Activated naive CD4-positive, alpha-beta T cell treated with anti-CD3 and anti-CD28 coated beads for 36 hours (primary cell): ENCODE measurements at regions of chr1 and their contacts with region 1.

Region 1: GRCh38 chr1:109213785-109214468 is at the start of gene SARS1:
- DNase-seq: peak; percentile 90
- H3K4me3 Mint-ChIP-seq: peak within 1 kb of the TSS; percentile 100
- H3K27ac Mint-ChIP-seq: peak within 1 kb of the TSS; percentile 100
- H3K4me1 Mint-ChIP-seq: peaks cover 24% of the 10 kb centered on the region
- H3K27me3 Mint-ChIP-seq: no peaks in the 10 kb centered on the region
- total RNA-seq, gene SARS1: 363 TPM

Region 2: DNA sequence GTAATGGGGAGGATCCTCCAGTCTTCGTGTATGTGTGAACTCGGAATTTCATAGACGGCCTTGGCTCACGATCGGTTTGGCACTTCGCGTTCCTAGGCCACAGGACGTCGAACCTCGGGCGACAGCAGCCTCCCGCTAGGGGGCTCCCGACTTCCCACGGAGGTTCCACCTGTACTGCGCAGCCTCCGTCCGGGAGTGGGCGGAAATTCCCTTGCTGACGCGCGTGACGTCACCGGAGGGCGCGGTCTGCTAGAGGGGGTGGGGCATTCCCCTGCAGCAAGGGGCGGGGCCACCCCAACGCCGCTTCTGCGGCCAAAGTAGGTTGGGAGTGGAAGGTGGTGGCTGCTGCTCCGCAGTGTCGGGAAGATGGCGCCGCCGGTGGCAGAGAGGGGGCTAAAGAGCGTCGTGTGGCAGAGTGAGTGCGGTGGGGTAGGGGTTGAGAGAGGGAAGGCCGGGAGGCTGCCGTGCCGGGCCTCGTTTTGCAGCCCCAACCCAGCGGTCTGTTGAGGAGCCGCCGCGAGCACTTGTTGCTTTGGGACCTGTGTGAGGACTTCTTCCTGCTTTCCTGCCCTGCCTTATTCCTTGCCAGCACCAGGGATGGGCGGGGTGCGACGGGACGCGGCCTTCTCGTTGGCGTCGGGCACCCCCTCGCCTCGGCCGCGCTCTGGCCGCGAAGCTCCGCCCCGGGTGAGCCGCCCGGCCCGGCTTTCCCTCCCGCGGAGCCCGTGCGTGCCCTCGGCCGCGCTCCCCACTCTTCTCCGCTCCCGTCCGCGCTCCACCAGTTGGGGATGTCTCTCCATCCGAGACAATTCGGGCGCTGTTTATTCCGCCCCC is 467.3 kb before region 1 on chr1 and contains the start of gene STXBP3:
- CTCF ChIA-PET with region 1: no interaction called
- intact Hi-C with region 1: loop called (anchors 1 kb)
- DNase-seq: peak; percentile 100
- H3K4me3 Mint-ChIP-seq: peak within 1 kb of the TSS; percentile 94
- H3K27ac Mint-ChIP-seq: peak within 1 kb of the TSS; percentile 92
- H3K4me1 Mint-ChIP-seq: peaks cover 28% of the 10 kb centered on the region
- H3K27me3 Mint-ChIP-seq: no peaks in the 10 kb centered on the region
- total RNA-seq, gene STXBP3: 29.1 to 30.3 TPM

Region 3: DNA sequence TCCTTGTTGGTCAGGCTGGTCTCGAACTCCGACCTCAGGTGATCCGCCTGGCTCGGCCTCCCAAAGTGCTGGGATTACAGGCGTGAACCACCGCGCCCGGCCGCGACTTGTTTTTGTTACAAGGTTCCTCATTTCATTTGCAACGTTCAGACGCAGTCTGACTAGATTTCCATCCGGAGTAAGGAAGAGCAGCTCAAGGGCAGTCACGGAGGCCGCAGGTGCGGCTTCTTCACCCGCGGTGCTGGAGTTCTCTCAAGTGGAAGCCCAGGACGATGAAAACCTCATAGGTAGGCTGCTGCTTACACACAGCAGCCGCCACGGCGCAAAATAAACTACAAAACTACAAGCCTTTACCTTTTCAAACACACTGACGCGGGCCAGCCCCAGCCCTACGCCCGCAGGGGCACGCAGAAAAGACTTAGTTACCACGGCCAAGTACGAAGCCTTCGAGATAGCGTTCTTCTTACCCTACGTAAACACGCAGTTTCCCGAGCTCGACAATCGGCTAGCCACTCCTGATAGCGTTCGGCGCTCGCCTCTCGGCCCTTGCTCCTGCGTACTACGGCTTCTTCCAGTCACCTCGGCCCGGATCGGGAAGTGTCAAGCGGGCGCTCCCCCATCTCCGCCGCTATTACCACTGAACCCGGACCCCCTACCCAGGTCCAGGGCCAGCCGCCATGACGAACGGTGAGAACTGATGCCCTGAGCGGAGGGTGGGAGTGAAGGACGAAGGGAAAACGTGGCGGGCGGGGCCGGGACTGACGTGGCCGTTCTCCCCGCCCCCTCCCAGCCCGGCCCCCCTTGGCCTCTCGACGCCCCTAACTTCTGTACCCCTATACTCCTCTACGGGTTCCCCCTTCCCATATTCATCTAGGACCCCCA is 123.5 kb before region 1 on chr1 and contains the start of gene TMEM167B:
- CTCF ChIA-PET with region 1: interaction called, 3 read pairs
- intact Hi-C with region 1: loop called (anchors 1 kb)
- DNase-seq: peak; percentile 95
- H3K4me3 Mint-ChIP-seq: peak within 1 kb of the TSS; percentile 82
- H3K27ac Mint-ChIP-seq: peak within 1 kb of the TSS; percentile 87
- H3K4me1 Mint-ChIP-seq: peaks cover 29% of the 10 kb centered on the region
- H3K27me3 Mint-ChIP-seq: no peaks in the 10 kb centered on the region
- total RNA-seq, gene TMEM167B: 35.0 to 37.6 TPM

Region 4: DNA sequence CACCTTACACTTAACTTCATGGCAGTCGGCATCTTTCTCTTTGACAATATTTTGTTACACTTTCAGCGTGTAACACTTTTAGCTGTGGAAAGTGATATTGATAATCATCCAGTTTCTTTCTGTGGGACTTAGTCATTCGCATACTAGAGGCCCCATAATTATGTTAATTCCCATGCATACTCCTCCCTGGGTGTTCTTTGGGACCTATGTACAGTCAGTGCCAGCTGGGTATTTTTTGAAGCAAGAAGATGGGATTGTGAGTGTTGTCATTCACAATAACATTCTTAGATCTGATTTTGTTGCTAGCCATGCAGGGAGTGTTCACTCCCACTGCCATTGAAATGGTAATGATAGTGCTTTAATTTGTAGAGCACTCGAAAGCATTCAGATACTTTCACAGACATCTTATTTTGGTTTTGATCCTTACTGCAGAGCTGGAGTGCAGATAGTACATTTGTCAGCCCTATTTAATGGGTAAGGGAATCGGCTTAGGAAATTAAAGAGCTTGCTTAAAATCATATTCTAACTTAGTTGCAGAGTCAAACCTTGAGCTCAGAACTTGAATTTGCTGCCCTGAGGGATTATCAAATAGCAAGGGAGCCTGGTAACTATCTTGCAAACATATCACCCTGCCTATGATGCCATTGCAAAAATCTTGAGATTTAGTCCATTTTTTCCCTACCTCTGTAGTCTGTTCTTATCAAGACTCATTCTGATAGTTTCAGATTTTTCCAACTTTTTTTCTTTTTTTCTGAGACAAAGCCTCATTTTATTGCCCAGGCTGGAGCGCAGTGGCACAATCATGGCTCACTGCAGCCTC is 11.5 kb after region 1 on chr1:
- CTCF ChIA-PET with region 1: no interaction called
- intact Hi-C with region 1: loop called (anchors 1 kb)
- DNase-seq: no peak
- H3K4me3 Mint-ChIP-seq: no peak overlapping the region
- H3K27ac Mint-ChIP-seq: no peak overlapping the region
- H3K4me1 Mint-ChIP-seq: peaks cover 41% of the 10 kb centered on the region
- H3K27me3 Mint-ChIP-seq: no peaks in the 10 kb centered on the region

Region 5: GRCh38 chr1:109282952-109283747 is 69.2 kb after region 1 on chr1 and contains the start of gene PSRC1:
- CTCF ChIA-PET with region 1: no interaction called
- intact Hi-C with region 1: loop called (anchors 1 kb)
- DNase-seq: peak; percentile 94
- H3K4me3 Mint-ChIP-seq: peak within 1 kb of the TSS; percentile 94
- H3K27ac Mint-ChIP-seq: peak within 1 kb of the TSS; percentile 89
- H3K4me1 Mint-ChIP-seq: peaks cover 6% of the 10 kb centered on the region
- H3K27me3 Mint-ChIP-seq: no peaks in the 10 kb centered on the region
- total RNA-seq, gene PSRC1: 19.3 to 21.5 TPM

Region 6: GRCh38 chr1:109620841-109621286 is 406.9 kb after region 1 on chr1:
- CTCF ChIA-PET with region 1: no interaction called
- intact Hi-C with region 1: loop called (anchors 5 kb)
- DNase-seq: peak; percentile 98
- H3K4me3 Mint-ChIP-seq: peak overlapping the region; percentile 93
- H3K27ac Mint-ChIP-seq: peak overlapping the region; percentile 91
- H3K4me1 Mint-ChIP-seq: peaks cover 57% of the 10 kb centered on the region
- H3K27me3 Mint-ChIP-seq: no peaks in the 10 kb centered on the region